Transverse colon (tissue), 4 donors: ENCODE measurements at regions of chr2 and their contacts with region 1.

Region 1: DNA sequence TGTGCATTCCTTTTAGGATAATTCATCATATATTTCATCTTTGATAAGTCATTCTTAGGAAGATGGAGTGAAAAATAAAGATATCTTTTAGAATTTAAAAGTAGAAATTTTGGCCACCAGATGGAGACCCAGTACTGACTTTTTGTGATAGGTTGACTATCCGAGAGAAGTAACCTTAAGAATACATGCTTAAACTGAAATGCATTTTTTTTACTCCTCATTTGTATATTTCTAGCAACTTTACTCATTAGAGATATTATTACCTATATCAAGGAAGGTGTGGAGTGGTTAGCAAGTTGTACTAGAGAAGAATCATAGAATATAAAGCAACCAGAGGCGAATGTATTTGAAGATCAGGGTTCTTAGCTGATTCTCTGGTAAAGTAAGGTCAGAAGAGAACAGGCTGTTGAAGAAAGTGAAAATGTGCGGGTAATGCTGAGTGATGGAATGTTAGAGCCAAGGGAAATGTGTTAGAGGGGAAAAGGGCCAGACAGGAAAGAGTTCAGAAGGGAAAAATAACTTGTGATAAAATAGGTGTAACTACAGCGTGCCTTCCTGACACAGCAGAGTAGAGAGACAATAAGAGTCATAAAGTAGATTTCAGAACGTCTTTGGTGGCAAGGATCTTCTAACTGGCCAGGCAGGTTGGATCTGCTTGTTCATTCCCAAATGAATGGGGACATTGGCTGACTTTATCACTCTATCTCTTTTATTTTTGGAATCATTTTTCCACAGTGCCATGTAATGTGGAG is 52.3 kb downstream of the TDRD15 start:
- DNase-seq: no peak
- H3K4me3 ChIP-seq: no peak overlapping the region
- H3K27ac ChIP-seq: no peak overlapping the region
- H3K4me1 ChIP-seq: peaks cover 0 to 9% (median 3%) of the 10 kb centered on the region in 4 donors
- H3K27me3 ChIP-seq: no peaks in the 10 kb centered on the region
- CTCF ChIP-seq: peak; percentile 31 to 54 (median 42)
- EP300 ChIP-seq: no peak
- POLR2A ChIP-seq: no peak

Region 2: GRCh38 chr2:20642055-20642971 is 533.8 kb before region 1 on chr2:
- in situ Hi-C with region 1: no loop called
- intact Hi-C with region 1: no loop called
- DNase-seq: peak; percentile 82
- H3K4me3 ChIP-seq: no peak overlapping the region
- H3K27ac ChIP-seq: peak overlapping the region; percentile 64 to 88 (median 85)
- H3K4me1 ChIP-seq: peaks cover 0 to 14% (median 10%) of the 10 kb centered on the region in 4 donors
- H3K27me3 ChIP-seq: no peaks in the 10 kb centered on the region
- CTCF ChIP-seq: peak; percentile 87 to 95 (median 92)
- EP300 ChIP-seq: no peak
- POLR2A ChIP-seq: no peak

Region 3: DNA sequence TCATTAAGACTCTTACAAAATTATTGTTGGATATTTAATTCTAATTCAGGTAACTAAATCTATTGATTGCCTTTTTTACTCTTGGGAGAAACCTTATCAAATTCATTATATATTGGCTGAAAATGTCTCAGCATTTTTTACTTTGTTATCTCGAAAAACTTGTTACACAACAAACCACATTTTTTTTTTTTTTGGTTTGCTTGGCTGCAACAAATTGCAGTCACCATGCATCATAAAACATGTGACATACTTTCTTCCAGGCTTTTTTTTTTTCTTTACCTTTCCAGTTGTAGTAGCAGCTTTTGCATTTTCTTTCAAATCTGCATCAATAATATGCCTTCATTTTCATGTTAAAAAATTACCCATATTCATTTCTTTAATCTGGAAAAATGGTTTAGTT is 134.4 kb after region 1 on chr2:
- in situ Hi-C with region 1: loop called in 2 of 4 experiments (anchors 5 to 10 kb)
- intact Hi-C with region 1: loop called (anchors 10 kb)
- DNase-seq: no peak
- H3K4me3 ChIP-seq: no peak overlapping the region
- H3K27ac ChIP-seq: no peak overlapping the region
- H3K4me1 ChIP-seq: no peaks in the 10 kb centered on the region
- H3K27me3 ChIP-seq: no peaks in the 10 kb centered on the region
- CTCF ChIP-seq: no peak
- EP300 ChIP-seq: no peak
- POLR2A ChIP-seq: no peak

Region 4: DNA sequence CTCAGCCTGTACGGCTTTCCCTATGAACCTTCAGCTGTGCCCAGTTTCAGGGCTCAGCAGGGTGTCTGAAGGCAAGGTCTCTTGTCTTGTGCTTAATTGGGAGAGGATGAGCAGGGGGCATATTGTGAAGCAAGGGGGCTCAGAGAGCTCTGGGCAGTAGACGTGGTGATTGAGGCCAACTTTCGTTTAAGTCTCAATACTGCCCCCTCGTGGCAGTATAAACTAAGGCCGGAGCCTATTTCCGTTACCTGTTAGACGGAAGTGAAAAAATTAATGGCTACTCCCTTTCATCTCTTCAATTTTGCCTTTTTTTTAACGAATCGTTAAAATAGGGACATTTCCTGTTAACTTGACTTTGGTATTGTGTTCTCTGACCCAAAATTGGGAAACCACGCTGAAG is 141.1 kb after region 1 on chr2:
- in situ Hi-C with region 1: loop called (anchors 5 to 10 kb)
- intact Hi-C with region 1: loop called (anchors 10 kb)
- DNase-seq: peak; percentile 57
- H3K4me3 ChIP-seq: no peak overlapping the region
- H3K27ac ChIP-seq: no peak overlapping the region
- H3K4me1 ChIP-seq: no peaks in the 10 kb centered on the region
- H3K27me3 ChIP-seq: no peaks in the 10 kb centered on the region
- CTCF ChIP-seq: peak; percentile 59 to 79 (median 68)
- EP300 ChIP-seq: no peak
- POLR2A ChIP-seq: no peak

Region 5: GRCh38 chr2:21326152-21326551 is 150.1 kb after region 1 on chr2:
- in situ Hi-C with region 1: loop called in 2 of 4 experiments (anchors 10 kb)
- intact Hi-C with region 1: no loop called
- DNase-seq: no peak
- H3K4me3 ChIP-seq: no peak overlapping the region
- H3K27ac ChIP-seq: no peak overlapping the region
- H3K4me1 ChIP-seq: no peaks in the 10 kb centered on the region
- H3K27me3 ChIP-seq: no peaks in the 10 kb centered on the region
- CTCF ChIP-seq: no peak
- EP300 ChIP-seq: no peak
- POLR2A ChIP-seq: no peak

Region 6: DNA sequence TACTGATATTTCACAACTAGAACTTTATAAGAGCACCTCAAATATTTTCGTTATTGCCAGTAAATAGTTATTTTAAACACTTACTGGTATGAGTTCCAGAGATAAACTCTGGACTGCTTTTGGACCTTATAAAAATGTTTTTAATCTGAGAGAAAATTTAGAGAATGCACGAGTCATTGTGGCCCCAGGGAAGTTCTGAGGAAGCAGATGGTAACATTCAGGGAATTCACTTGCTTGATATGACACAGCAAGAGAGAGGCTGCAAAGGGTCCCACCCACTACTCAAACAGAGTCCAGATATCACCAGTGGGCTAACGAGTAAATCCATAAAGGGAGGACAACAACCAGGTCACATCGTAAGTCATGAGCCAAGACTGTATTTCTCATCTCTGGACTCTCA is 474.5 kb after region 1 on chr2:
- in situ Hi-C with region 1: no loop called
- intact Hi-C with region 1: no loop called
- DNase-seq: no peak
- H3K4me3 ChIP-seq: no peak overlapping the region
- H3K27ac ChIP-seq: no peak overlapping the region
- H3K4me1 ChIP-seq: no peaks in the 10 kb centered on the region
- H3K27me3 ChIP-seq: no peaks in the 10 kb centered on the region
- CTCF ChIP-seq: no peak
- EP300 ChIP-seq: no peak
- POLR2A ChIP-seq: no peak

Region 7: DNA sequence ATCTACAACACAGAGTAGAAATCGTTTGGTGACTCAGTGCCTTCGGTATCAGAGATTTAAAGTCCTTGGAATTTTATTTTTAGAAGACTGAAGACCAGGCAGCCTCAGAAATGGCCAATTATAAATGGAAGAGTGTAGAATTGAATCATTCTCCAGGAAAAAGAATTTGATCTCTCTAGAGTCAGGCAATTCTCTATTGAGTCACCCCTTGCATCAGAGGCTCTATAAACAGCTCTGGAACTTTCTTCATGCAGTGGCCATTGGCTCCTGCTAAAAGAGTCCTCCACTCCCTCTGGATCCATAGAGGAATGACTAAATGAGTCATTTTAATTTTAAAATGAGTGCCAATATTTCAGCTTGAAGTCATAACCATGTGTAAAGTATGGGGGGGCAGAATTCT is 763.9 kb after region 1 on chr2:
- in situ Hi-C with region 1: no loop called
- intact Hi-C with region 1: loop called (anchors 5 kb)
- DNase-seq: no peak
- H3K4me3 ChIP-seq: no peak overlapping the region
- H3K27ac ChIP-seq: no peak overlapping the region
- H3K4me1 ChIP-seq: no peaks in the 10 kb centered on the region
- H3K27me3 ChIP-seq: no peaks in the 10 kb centered on the region
- CTCF ChIP-seq: no peak
- EP300 ChIP-seq: no peak
- POLR2A ChIP-seq: no peak